Sigmoid colon (tissue), 7 donors: ENCODE measurements at regions of chr12 and their contacts with region 1.

Region 1: GRCh38 chr12:115213538-115214016 is 529.6 kb upstream of the TBX3 start:
- DNase-seq: no peak
- H3K4me3 ChIP-seq: no peak overlapping the region
- H3K27ac ChIP-seq: peak overlapping the region in 1 of 4 donors; percentile 33
- H3K4me1 ChIP-seq: peaks cover 0 to 37% (median 23%) of the 10 kb centered on the region in 4 donors
- H3K27me3 ChIP-seq: no peaks in the 10 kb centered on the region
- CTCF ChIP-seq: no peak
- EP300 ChIP-seq: no peak
- POLR2A ChIP-seq: no peak

Region 2: DNA sequence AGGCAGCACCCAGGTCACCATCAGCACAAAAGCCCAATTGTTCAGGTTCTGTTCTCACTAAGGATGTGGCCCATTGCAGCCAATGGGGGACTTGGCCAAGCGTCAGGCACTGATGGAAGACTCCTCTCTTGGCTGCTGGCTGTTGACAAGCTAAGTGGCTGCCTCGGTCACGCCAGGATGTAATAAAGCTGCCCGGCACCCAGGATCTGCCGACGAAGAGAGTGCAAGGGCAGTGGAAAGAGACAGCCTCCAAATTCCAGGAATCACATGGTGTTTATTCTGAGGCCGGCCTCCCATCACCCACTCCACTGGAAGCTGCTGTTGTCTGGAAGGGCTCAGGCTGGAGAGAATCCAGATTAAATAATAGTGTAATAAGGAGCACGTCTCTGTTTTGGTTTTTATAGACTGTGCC is 77.8 kb before region 1 on chr12:
- intact Hi-C with region 1: loop called (anchors 5 kb)
- DNase-seq: peak; percentile 88
- H3K4me3 ChIP-seq: no peak overlapping the region
- H3K27ac ChIP-seq: peak overlapping the region in 2 of 4 donors; percentile 46 to 59
- H3K4me1 ChIP-seq: peaks cover 0 to 14% (median 3%) of the 10 kb centered on the region in 4 donors
- H3K27me3 ChIP-seq: no peaks in the 10 kb centered on the region
- CTCF ChIP-seq: no peak
- EP300 ChIP-seq: peak in 2 of 4 donors; percentile 44 to 70
- POLR2A ChIP-seq: no peak

Region 3: GRCh38 chr12:115174920-115175319 is 38.7 kb before region 1 on chr12:
- intact Hi-C with region 1: loop called (anchors 2 kb)
- DNase-seq: no peak
- H3K4me3 ChIP-seq: no peak overlapping the region
- H3K27ac ChIP-seq: peak overlapping the region in 3 of 4 donors; percentile 27 to 41 (median 37)
- H3K4me1 ChIP-seq: peaks cover 0 to 26% (median 15%) of the 10 kb centered on the region in 4 donors
- H3K27me3 ChIP-seq: no peaks in the 10 kb centered on the region
- CTCF ChIP-seq: no peak
- EP300 ChIP-seq: no peak
- POLR2A ChIP-seq: no peak

Region 4: GRCh38 chr12:115313929-115314328 is 100.4 kb after region 1 on chr12:
- intact Hi-C with region 1: no loop called
- DNase-seq: no peak
- H3K4me3 ChIP-seq: no peak overlapping the region
- H3K27ac ChIP-seq: no peak overlapping the region
- H3K4me1 ChIP-seq: peaks cover 0 to 7% (median 3%) of the 10 kb centered on the region in 4 donors
- H3K27me3 ChIP-seq: no peaks in the 10 kb centered on the region
- CTCF ChIP-seq: no peak
- EP300 ChIP-seq: no peak
- POLR2A ChIP-seq: no peak

Region 5: DNA sequence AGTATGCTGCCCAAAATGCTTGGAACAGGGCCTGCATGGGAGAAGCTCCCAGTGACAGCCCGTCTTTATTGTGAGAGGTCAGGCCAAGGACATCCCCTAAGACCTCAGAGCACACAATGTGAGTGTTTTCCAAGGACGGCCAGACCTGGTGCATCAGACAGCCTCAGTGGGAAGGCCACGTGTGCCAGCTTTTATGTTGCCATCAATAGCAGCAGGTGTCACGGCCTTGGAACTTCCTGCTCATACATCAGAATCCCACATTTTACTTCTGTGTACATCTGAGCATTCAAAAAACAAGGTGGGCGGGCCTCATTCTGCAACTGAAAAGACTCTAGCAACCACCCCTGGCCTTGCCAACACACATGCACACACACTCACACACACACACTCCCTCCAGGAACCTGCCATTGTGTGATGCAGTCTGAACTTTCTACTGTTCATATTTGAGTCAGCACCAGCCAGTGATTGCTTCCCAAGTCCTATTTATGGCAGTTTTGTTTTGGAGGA is 223.5 kb after region 1 on chr12:
- intact Hi-C with region 1: no loop called
- DNase-seq: no peak
- H3K4me3 ChIP-seq: no peak overlapping the region
- H3K27ac ChIP-seq: no peak overlapping the region
- H3K4me1 ChIP-seq: no peaks in the 10 kb centered on the region
- H3K27me3 ChIP-seq: no peaks in the 10 kb centered on the region
- CTCF ChIP-seq: no peak
- EP300 ChIP-seq: no peak
- POLR2A ChIP-seq: no peak